Dorsolateral prefrontal cortex (tissue), 120 donors: ENCODE measurements at regions of chr11 and their contacts with region 1.

Region 1: DNA sequence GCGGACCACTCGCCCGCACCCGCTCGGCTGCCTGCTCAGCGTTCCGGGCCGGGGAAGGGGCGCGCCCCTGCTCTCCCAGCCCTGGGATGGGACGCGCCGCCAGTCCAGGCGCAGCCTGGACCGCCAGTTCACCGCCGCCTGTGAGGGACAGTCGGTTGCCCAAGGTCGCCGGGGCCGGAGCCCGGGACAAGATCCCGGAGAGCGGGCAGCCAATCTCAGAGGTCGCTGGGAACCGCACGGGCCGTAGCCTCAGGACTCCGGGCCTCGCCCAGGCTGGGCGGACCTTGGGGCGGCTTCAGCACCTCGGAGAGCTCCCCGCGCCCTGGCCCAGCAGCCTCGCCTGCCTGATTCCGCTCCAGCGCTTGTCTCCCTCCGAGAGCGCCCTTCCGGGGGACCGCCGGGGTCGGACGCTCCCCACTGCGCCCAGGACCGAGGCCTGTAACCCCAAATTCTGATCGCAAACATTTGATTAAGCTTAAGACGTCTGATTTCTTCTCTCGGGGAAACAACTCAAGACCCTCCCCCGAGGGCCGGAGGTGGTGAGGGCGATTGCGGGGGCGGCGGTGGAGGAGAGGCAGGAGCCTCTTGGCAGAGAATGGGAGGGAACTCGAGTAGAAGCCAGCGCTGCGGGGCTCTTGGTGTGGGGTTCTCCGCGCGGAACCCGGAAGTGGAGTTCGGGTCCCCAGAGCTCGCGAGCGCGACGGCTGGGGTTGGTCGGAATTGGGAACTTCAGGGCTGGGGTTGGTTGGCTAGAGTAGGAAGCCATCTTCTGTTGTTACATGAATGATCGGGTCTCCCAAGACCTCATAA is 1.1 kb upstream of the CHRM4 start:
- DNase-seq: peak in 8 of 10 donors; percentile 25 to 84 (median 62)
- H3K4me3 ChIP-seq: peak overlapping the region; percentile 34 to 73 (median 57)
- H3K27ac ChIP-seq: peak overlapping the region in 38 of 59 donors; percentile 4 to 86 (median 39)
- H3K27me3 ChIP-seq: peaks cover 0 to 44% (median 15%) of the 10 kb centered on the region in 45 donors
- CTCF ChIP-seq: peak in 26 of 56 donors; percentile 12 to 55 (median 26)

Region 2: GRCh38 chr11:46176402-46176801 is 216.2 kb before region 1 on chr11:
- intact Hi-C with region 1: no loop called
- DNase-seq: no peak
- H3K4me3 ChIP-seq: no peak overlapping the region
- H3K27ac ChIP-seq: no peak overlapping the region
- H3K27me3 ChIP-seq: peaks cover 0 to 8% (median 0%) of the 10 kb centered on the region in 45 donors
- CTCF ChIP-seq: no peak

Region 3: GRCh38 chr11:46445920-46446771 is 53.5 kb after region 1 on chr11:
- intact Hi-C with region 1: loop called in 1 of 2 experiments (anchors 10 kb)
- DNase-seq: no peak
- H3K4me3 ChIP-seq: no peak overlapping the region
- H3K27ac ChIP-seq: peak overlapping the region in 34 of 59 donors; percentile 2 to 74 (median 28)
- H3K27me3 ChIP-seq: no peaks in the 10 kb centered on the region
- CTCF ChIP-seq: peak in 46 of 56 donors; percentile 11 to 65 (median 39)

Region 4: DNA sequence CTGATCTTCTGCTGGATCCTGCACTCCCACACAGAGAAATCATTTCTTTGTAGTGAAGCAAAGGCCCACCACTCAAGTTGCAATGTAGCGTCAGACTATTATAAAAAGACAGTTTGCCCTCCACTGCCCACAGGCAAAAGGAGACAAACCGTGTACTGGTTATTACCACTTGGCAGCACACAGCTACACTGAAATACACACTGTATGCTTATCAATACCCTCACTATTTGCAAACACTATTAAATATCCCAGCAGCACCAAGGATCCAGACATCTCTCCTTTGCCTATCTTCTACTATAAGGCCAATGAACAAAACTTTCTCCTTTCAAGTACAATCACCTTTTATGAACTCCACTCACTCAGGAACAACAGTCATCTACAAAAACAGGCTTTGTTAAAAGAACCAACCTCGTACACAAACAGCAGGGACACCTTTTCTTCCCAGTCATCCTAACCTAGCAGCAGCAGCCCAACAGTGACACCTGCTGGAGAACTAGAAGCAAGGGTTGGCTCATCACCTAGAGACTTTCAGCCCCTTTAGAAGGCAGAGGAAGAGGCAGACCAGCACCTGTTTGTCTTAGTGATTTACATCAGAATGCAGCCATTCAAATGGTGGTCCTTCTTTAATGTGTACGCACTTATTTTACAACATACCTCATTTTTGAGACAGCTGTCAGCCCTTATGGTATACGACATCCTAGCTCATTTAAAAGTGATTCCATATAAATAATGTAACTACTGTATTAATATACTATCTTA is 145.1 kb after region 1 on chr11:
- intact Hi-C with region 1: loop called (anchors 2 to 5 kb)
- DNase-seq: peak in 8 of 10 donors; percentile 41 to 78 (median 58)
- H3K4me3 ChIP-seq: no peak overlapping the region
- H3K27ac ChIP-seq: peak overlapping the region in 16 of 59 donors; percentile 2 to 53 (median 24)
- H3K27me3 ChIP-seq: no peaks in the 10 kb centered on the region
- CTCF ChIP-seq: peak; percentile 72 to 94 (median 89)

Region 5: DNA sequence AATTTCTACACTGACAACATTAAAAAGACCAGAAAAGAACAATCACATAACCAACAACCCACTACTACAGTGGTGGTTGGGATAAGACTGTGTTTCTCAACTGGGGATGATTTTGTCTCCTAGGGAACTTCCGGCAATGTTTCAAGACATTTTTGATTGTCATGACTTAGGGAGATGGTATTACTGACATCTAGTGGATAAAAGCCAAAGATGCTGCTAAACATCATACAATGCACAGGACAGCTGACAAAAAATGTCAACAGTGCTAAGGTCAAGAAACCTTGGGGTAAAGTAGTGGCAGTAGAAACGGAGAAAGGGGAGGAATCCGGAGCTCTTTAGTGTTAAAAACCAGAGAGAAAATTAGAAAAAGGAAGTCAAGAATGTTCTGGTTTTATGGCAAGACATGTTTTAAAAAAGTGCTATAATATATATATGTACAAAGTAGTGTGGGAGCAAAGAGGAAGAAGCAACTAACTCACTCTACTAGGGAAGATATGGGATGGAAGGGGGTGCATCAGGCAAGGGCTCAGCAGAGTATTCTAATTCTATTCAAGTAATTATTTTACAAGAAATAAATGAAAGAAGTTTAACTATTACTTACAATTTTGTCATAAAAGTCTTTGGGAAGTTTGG is 416.3 kb after region 1 on chr11:
- intact Hi-C with region 1: loop called in 1 of 2 experiments (anchors 10 kb)
- DNase-seq: no peak
- H3K4me3 ChIP-seq: no peak overlapping the region
- H3K27ac ChIP-seq: peak overlapping the region in 2 of 59 donors; percentile 26 to 55
- H3K27me3 ChIP-seq: no peaks in the 10 kb centered on the region
- CTCF ChIP-seq: peak in 50 of 56 donors; percentile 17 to 68 (median 42)